ENCODE measurements at regions of chr2 and their contacts with region 1.

Region 1: DNA sequence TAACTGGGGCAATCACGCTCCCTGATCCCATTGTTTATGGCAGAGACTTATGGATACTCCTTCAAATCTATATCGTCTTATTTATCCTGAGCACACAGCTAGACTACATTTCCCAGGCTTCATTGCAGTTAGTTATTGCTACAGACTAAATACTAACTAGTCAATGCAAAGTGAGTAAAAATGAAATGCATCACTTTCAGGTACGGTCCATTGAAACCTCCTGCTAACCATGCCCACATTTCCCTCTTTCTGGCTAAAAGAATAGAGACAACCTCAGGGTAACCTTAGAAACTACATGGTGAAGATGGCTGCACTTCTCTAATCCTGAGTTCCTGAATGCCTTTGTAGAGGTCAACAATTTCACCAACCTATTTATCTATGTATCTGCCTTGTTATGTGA is 437.4 kb downstream of the EPHA4 start:
- DNase-seq: no peak
- ATAC-seq: no peak
- H3K4me3 ChIP-seq: no peak overlapping the region
- H3K27ac ChIP-seq: no peak overlapping the region
- H3K4me1 ChIP-seq: no peaks in the 10 kb centered on the region
- H3K27me3 ChIP-seq: no peaks in the 10 kb centered on the region
- CTCF ChIP-seq: no peak

Region 2: DNA sequence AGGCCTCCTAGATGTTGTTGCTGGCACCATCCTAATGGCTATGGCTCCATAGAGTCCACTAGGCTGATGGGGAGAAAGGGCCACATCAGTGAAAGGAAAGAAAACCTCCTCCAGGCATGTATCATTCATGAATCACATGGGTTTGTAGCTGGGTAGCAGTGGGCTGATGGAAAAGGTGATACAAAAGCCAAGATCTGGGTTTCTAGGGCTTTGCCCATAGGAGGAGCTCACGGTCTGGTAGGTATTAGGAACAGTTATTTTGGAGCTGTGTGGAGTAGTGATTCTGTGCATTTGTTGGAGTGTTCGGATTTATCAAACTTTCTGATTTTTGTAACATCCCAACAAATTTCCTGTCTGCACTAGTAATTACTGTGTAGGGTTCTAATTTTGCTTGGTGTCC is 1248.1 kb before region 1 on chr2:
- CTCF ChIA-PET with region 1: interaction called, 11 read pairs
- POLR2A ChIA-PET with region 1: no interaction called
- intact Hi-C with region 1: no loop called
- DNase-seq: peak; percentile 75
- ATAC-seq: peak; percentile 73
- H3K4me3 ChIP-seq: no peak overlapping the region
- H3K27ac ChIP-seq: no peak overlapping the region
- H3K4me1 ChIP-seq: peaks cover 12% of the 10 kb centered on the region
- H3K27me3 ChIP-seq: no peaks in the 10 kb centered on the region
- CTCF ChIP-seq: peak; percentile 65

Region 3: DNA sequence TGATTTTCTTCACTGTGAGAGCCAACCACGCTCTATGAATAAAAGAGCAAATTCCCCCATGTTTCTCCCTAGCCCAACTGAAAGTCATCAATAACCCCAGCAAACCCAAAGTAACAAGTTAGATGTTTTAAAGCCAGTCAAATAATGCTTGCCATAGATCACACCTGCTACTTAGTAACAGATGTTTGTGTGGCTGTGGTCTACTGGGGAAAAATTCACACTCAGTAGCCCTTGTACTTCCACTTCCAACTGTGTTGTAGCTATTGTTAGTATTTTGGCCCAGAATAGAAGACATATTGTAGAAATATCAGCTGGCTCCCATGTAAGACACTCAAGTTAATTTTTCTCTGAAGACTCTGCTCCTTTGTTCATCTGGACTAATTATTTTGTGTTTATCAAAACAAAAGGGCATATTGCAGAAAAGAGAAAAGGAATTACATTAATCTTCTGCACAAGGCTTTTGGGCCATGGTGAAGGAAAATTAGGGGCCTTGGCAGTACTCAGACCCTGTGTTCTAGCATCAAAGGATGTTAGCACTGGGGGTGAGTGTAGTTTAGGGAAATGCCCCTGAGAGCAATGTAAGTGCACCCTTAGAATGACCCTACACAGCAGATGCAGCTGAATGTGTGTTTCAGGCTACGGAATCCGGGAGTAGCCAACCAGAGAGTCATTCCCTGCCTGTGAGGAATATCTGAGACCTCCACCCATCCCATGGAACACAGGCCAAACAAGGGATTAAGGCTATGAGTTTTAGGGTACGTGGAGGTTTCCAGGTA is 84.5 kb before region 1 on chr2:
- CTCF ChIA-PET with region 1: no interaction called
- POLR2A ChIA-PET with region 1: no interaction called
- intact Hi-C with region 1: no loop called
- DNase-seq: no peak
- ATAC-seq: no peak
- H3K4me3 ChIP-seq: no peak overlapping the region
- H3K27ac ChIP-seq: no peak overlapping the region
- H3K4me1 ChIP-seq: no peaks in the 10 kb centered on the region
- H3K27me3 ChIP-seq: 0 out of 2 replicates have a peak, but pooled peaks cover 8% of the 10 kb centered on the region
- CTCF ChIP-seq: no peak